Prostate gland (tissue), 2 donors: ENCODE measurements at regions of chr3 and their contacts with region 1.

Region 1: DNA sequence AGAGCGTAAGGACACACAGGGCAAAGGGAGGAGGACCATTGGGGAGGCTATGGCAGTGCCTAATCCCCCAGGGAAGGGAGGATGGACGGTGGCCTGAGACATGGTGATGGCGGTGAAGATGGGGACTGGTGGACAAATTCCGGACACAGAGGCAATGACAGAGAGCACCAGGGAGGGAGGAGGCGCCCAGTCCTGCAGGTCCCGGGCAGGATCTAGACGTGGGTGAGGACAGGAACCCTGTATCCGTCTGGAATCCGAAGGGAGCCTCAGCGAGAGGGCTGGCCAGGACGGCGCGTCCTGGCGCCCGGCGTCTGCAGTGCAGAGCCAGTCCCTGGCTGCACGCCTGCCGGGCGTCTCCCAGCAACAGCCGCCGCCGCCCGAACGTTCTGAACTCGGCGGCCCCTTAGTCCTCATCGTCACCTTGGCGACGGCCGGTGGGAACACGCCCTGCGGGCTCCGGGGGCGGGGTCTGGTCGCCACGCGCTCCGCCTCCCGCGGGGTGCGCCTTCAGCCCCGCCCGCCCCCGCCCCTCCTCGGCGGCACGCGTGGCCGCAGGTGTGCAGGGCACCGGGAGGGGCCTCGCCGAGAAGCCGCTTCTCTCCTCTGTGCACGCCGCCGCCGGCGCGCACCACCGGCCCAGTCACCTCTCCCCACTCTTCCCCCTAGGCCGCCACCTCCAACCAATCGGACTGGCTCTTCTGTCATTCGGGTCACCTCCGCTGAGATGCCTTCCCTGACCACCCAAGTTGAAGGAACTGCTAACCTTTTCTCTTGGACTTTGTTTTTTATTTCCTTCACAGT is 11.6 kb downstream of the XIRP1 start:
- DNase-seq: peak; percentile 97
- H3K4me3 ChIP-seq: peak overlapping the region; percentile 11 to 19
- H3K27ac ChIP-seq: peak overlapping the region; percentile 93 to 94
- H3K4me1 ChIP-seq: peaks cover 4% of the 10 kb centered on the region
- H3K27me3 ChIP-seq: no peaks in the 10 kb centered on the region
- CTCF ChIP-seq: peak in 2 of 4 experiments; percentile 51 to 63
- POLR2A ChIP-seq: peak; percentile 64

Region 2: DNA sequence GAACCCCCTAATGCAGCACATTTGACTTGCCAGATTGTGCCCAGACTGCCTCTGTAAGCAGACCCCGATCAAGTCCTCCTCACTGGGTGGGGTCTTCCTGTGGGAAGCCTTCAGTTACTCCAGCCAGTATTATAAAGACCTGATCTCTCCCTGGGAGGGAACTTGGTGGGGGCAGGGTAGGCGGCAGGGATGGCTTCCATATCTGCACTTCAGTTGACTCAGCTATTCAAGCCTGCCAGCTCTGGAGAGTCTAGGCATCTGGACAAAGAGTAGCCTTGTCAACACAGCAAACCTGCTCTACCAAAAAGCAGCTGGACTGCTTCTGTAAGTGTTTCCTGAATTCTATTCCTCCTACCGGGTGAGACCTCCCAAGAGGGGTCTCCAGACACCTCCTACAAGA is 181.4 kb after region 1 on chr3:
- intact Hi-C with region 1: no loop called
- DNase-seq: peak; percentile 21
- H3K4me3 ChIP-seq: no peak overlapping the region
- H3K27ac ChIP-seq: no peak overlapping the region
- H3K4me1 ChIP-seq: no peaks in the 10 kb centered on the region
- H3K27me3 ChIP-seq: no peaks in the 10 kb centered on the region
- CTCF ChIP-seq: no peak
- POLR2A ChIP-seq: no peak

Region 3: DNA sequence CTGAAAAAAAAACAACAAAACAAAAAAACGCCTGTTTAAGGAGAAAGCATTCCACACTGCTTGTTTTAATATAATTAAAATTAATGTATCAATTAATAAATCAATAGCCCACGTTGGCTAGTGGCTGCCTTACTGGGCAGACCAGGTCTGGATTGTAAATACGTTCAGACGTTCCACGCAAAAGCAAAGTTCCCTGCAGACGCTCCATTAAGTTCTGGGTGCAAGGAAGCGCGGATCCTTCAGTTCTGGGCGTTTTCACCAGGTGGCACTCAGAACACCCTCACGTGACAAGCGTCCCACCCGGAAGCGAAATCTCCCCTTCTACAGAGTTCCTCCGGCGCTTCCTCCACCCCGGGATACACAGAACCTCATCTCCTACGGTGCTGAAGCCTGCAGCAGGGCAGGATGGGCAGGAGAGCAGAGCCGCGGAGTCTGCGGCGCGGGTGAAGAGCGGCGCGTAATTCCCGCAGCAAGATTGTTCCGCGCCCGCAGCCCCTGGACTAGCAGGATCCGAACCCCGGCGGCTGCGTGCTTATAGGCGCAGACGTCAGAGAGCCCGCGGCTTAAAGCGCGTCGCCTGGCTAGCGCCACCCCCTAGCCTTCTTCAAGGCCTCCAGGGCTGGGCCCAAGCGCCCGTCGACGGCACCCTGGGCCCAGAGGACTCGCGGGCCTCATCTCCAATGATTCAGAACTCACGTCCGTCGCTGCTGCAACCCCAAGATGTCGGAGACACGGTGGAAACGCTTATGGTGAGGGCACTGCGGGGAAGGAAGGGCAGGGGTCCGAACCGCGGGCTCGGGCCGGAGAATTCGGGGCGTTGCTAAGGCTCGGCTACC is 202.5 kb after region 1 on chr3 and contains the start of gene SLC25A38:
- intact Hi-C with region 1: loop called (anchors 10 kb)
- DNase-seq: peak; percentile 75
- H3K4me3 ChIP-seq: peak within 1 kb of the TSS; percentile 58 to 69
- H3K27ac ChIP-seq: peak within 1 kb of the TSS; percentile 91 to 95
- H3K4me1 ChIP-seq: no peaks in the 10 kb centered on the region
- H3K27me3 ChIP-seq: no peaks in the 10 kb centered on the region
- CTCF ChIP-seq: peak in 2 of 4 experiments; percentile 37 to 51
- POLR2A ChIP-seq: peak; percentile 49
- total RNA-seq, gene SLC25A38: 36.7 to 72.4 TPM